Activated CD4-positive, alpha-beta memory T cell treated with anti-CD3 and anti-CD28 coated beads for 36 hours (primary cell): ENCODE measurements at regions of chr10 and their contacts with region 1.

Region 1: DNA sequence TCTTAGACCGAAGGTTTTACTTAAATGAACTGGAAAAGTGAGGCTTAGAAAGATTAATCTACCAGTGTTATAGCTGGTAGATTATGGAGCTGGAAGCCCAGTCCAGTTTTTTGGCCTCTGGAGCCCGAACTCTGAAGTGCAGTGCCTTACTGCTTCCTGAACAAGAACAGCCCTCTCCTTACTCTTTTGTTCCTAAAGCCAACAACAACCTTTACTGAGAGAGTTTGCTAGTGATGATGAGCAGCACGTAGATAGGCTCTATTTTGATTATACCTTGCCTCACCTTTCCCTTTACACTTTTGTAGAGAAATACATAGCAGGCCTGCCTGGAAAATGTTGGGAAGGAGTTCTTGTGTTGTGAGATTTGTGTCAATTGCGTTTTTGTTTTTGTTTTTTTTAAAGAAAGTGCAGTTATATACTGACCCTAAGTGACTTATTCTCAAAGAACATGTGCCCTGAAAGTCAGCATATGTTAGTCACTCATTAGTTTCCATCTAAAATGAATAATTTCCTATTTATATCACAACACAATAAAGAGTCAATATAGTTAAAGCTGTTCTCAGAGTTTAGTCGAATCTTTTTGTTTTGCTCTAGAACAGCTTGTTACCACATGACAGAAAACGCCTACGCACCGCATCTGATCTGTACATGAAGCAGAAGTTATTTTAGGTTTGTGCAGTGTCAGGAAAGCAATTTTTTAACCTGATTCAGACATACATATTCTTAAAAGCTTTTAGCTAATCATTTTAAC is 33.0 kb downstream of the PLEKHA1 start:
- DNase-seq: peak; percentile 79
- H3K4me3 Mint-ChIP-seq: no peak overlapping the region
- H3K27ac Mint-ChIP-seq: peak overlapping the region; percentile 78
- H3K4me1 Mint-ChIP-seq: peaks cover 45% of the 10 kb centered on the region
- H3K27me3 Mint-ChIP-seq: no peaks in the 10 kb centered on the region

Region 2: DNA sequence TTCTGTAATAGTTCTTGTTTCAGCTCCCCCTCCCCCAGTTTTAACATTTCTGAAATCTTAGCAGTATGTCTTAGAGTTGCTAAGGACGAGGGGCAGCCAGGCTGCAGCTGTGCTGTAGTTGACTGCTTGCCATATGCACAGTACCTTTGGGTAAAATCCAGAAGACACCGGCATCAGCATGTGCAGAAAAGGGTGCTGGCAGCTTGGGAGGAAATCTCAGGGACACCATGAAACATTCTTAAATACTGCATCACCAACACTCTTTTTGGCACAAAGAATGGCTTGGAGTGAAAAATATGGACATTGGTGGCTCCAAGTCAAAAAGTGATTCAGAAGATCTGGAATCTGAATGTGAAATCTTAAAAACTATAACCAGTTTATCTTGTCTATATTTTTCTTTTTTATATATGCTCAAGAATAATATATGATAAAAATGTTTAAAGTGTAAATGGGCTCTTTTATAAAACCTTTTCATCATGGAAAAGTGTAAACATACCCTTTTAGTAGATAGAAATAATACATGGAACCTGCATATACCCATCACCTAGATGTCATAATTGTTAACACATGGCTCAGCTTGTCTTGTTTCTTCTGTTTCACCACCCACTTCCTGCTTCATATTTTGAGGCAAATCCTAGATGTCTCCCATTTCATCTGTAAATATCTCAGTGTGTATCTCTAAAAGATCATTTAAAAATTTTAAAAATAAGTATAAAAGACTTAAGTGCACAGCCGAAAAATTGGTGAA is 12.5 kb after region 1 on chr10:
- CTCF ChIA-PET with region 1: interaction called, 4 read pairs
- POLR2A ChIA-PET with region 1: interaction called, 3 read pairs
- intact Hi-C with region 1: loop called (anchors 2 kb)
- DNase-seq: no peak
- H3K4me3 Mint-ChIP-seq: no peak overlapping the region
- H3K27ac Mint-ChIP-seq: no peak overlapping the region
- H3K4me1 Mint-ChIP-seq: peaks cover 68% of the 10 kb centered on the region
- H3K27me3 Mint-ChIP-seq: no peaks in the 10 kb centered on the region

Region 3: GRCh38 chr10:122446668-122447423 is 39.3 kb after region 1 on chr10:
- CTCF ChIA-PET with region 1: no interaction called
- POLR2A ChIA-PET with region 1: no interaction called
- intact Hi-C with region 1: no loop called
- DNase-seq: no peak
- H3K4me3 Mint-ChIP-seq: no peak overlapping the region
- H3K27ac Mint-ChIP-seq: no peak overlapping the region
- H3K4me1 Mint-ChIP-seq: no peaks in the 10 kb centered on the region
- H3K27me3 Mint-ChIP-seq: peaks cover 12% of the 10 kb centered on the region

Region 4: GRCh38 chr10:123743976-123744411 is 1336.4 kb after region 1 on chr10:
- CTCF ChIA-PET with region 1: no interaction called
- POLR2A ChIA-PET with region 1: no interaction called
- intact Hi-C with region 1: no loop called
- DNase-seq: no peak
- H3K4me3 Mint-ChIP-seq: no peak overlapping the region
- H3K27ac Mint-ChIP-seq: no peak overlapping the region
- H3K4me1 Mint-ChIP-seq: no peaks in the 10 kb centered on the region
- H3K27me3 Mint-ChIP-seq: peaks cover 5% of the 10 kb centered on the region